WTC11 (cell line): ENCODE measurements at regions of chr15 and their contacts with region 1.

Region 1: DNA sequence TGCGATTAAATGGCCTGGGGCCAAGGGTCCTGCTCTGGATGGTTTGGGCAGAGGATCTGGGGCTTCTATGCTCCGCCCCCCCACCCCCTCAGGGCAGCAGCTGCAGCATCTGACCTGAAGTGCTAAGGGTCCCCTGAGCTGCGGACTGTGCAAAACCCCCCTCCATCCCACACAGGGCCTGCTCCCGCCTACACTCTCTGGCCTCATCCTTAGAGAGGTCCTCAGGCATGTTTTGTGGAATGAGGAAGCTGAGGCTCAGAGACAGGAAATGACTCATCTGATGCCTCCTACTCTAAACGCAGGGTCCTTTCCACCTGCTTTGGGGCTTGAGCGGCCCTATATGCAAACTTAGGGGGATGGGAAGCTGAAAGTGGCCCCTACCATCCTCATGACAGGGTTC is 59.5 kb upstream of the CTSH start:
- DNase-seq: no peak
- ATAC-seq: peak; percentile 82
- H3K4me3 Mint-ChIP-seq: no peak overlapping the region
- H3K27ac Mint-ChIP-seq: no peak overlapping the region
- H3K4me1 Mint-ChIP-seq: peaks cover 18% of the 10 kb centered on the region
- H3K27me3 Mint-ChIP-seq: no peaks in the 10 kb centered on the region
- CTCF ChIP-seq: no peak

Region 2: DNA sequence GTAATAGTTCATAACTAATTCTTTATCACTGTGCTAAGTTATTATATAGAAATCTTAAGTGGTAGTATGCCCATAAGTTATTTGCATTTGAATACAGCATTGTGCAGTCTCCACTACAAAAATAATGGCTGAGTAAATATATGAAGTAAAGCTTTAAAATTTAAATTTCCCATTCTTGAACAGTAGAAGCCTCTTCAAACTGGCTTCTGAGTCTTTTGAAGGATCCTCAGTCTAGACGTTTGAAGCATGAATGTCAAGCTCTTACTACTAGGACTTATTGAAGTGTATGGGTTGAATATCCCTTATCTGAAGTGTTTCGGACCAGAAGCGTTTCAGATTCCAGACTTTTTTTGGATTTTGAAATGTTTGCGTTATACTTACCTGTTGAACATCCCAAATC is 115.3 kb before region 1 on chr15:
- CTCF ChIA-PET with region 1: no interaction called
- POLR2A ChIA-PET with region 1: no interaction called
- DNase-seq: no peak
- ATAC-seq: no peak
- H3K4me3 Mint-ChIP-seq: no peak overlapping the region
- H3K27ac Mint-ChIP-seq: 0 out of 2 replicates have a peak overlapping the region, but pooled peaks have one; percentile 11
- H3K4me1 Mint-ChIP-seq: peaks cover 6% of the 10 kb centered on the region; the same call in 1 of the 2 replicates
- H3K27me3 Mint-ChIP-seq: no peaks in the 10 kb centered on the region
- CTCF ChIP-seq: no peak

Region 3: DNA sequence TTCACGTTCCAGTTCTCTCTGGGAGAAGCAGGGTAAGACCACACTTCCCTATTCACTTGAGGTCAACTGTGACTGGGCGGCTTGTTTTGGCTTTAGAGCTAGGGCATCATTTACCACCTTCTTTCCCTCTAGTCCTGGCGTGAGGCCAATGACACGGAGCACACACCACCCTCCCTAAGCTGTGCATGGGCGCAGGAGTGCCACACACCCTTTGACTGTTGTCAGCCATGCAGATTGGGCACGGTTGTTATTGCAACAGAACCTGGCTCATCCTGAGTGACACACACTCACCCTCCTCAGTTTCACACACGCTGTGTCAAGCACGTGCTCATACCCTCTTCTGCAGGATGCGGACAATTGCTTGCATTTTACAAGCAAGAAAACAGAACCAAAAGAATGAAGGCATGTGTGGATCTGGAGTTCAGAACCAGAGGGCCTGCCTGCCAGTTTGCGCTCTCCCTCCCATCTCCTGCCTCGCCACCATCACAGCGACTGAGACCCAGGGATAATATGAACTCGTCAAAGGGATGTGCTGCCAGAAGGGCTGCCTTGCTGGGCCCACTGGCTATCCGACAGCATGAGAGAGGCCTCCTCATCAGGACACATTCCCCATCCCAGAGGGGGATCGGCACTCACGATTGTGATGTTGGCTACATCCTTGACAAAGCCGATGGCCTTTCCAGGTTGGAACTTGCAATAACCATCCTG is 77.1 kb before region 1 on chr15:
- CTCF ChIA-PET with region 1: interaction called, 25 read pairs
- POLR2A ChIA-PET with region 1: no interaction called
- DNase-seq: no peak
- ATAC-seq: no peak
- H3K4me3 Mint-ChIP-seq: no peak overlapping the region
- H3K27ac Mint-ChIP-seq: no peak overlapping the region
- H3K4me1 Mint-ChIP-seq: peaks cover 2% of the 10 kb centered on the region; the same call in 1 of the 2 replicates
- H3K27me3 Mint-ChIP-seq: no peaks in the 10 kb centered on the region
- CTCF ChIP-seq: no peak

Region 4: GRCh38 chr15:78950904-78951840 is 53.2 kb before region 1 on chr15:
- CTCF ChIA-PET with region 1: interaction called, 11 read pairs
- POLR2A ChIA-PET with region 1: no interaction called
- DNase-seq: no peak
- ATAC-seq: peak; percentile 57
- H3K4me3 Mint-ChIP-seq: no peak overlapping the region
- H3K27ac Mint-ChIP-seq: no peak overlapping the region
- H3K4me1 Mint-ChIP-seq: peaks cover 18% of the 10 kb centered on the region
- H3K27me3 Mint-ChIP-seq: peaks cover 17% of the 10 kb centered on the region
- CTCF ChIP-seq: no peak

Region 5: GRCh38 chr15:78988361-78988911 is 15.9 kb before region 1 on chr15:
- CTCF ChIA-PET with region 1: interaction called, 16 read pairs
- POLR2A ChIA-PET with region 1: no interaction called
- DNase-seq: no peak
- ATAC-seq: no peak; the same call in 1 of the 2 replicates
- H3K4me3 Mint-ChIP-seq: no peak overlapping the region
- H3K27ac Mint-ChIP-seq: no peak overlapping the region
- H3K4me1 Mint-ChIP-seq: no peaks in the 10 kb centered on the region
- H3K27me3 Mint-ChIP-seq: no peaks in the 10 kb centered on the region; the same call in 1 of the 2 replicates
- CTCF ChIP-seq: no peak

Region 6: GRCh38 chr15:79049416-79049815 is 45.1 kb after region 1 on chr15:
- CTCF ChIA-PET with region 1: interaction called, 12 read pairs
- POLR2A ChIA-PET with region 1: no interaction called
- DNase-seq: no peak
- ATAC-seq: no peak
- H3K4me3 Mint-ChIP-seq: no peak overlapping the region
- H3K27ac Mint-ChIP-seq: no peak overlapping the region
- H3K4me1 Mint-ChIP-seq: no peaks in the 10 kb centered on the region
- H3K27me3 Mint-ChIP-seq: peaks cover 32% of the 10 kb centered on the region
- CTCF ChIP-seq: no peak

Region 7: DNA sequence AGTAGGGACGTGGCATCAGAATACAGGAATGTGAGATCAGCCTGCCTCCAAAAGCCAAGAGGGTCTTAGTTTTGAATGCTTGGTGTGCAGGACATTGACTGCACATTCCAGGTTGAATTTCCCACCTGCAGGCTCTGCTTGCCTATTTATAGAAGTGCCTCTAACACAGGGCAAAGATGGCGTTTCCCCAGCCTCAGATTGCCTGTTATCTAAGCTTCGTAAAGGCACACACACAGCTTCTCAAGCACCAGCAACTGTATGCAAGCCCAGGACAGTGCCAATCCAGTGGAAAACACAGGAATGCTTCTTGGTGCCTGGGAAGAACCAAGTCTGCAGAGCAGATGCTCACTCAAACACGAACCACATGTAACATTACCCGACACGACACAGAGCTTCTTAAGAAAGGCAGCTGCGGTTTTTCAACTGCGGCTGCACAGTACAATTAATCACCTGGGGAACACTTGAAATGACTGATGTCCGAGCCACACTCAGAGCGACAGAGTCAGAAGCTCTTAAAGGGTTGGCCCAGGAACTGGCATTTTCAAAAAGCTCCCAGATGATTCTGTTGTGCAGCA is 188.2 kb after region 1 on chr15:
- CTCF ChIA-PET with region 1: interaction called, 11 read pairs
- POLR2A ChIA-PET with region 1: no interaction called
- DNase-seq: no peak
- ATAC-seq: no peak
- H3K4me3 Mint-ChIP-seq: no peak overlapping the region
- H3K27ac Mint-ChIP-seq: no peak overlapping the region
- H3K4me1 Mint-ChIP-seq: peaks cover 27% of the 10 kb centered on the region
- H3K27me3 Mint-ChIP-seq: peaks cover 7% of the 10 kb centered on the region
- CTCF ChIP-seq: no peak